Heart left ventricle (tissue), 16 donors: ENCODE measurements at regions of chr3 and their contacts with region 1.

Region 1: GRCh38 chr3:65385805-65386204 is 652.9 kb downstream of the MAGI1 start:
- DNase-seq: no peak
- ATAC-seq: peak in 3 of 4 donors; percentile 43 to 67 (median 45)
- H3K4me3 ChIP-seq: no peak overlapping the region
- H3K27ac ChIP-seq: peak overlapping the region in 1 of 12 donors; percentile 59
- H3K4me1 ChIP-seq: peaks cover 0 to 7% (median 0%) of the 10 kb centered on the region in 12 donors
- H3K27me3 ChIP-seq: no peaks in the 10 kb centered on the region
- CTCF ChIP-seq: no peak
- POLR2A ChIP-seq: no peak

Region 2: GRCh38 chr3:64084640-64085039 is 1301.2 kb before region 1 on chr3:
- intact Hi-C with region 1: no loop called
- DNase-seq: no peak
- ATAC-seq: no peak
- H3K4me3 ChIP-seq: no peak overlapping the region
- H3K27ac ChIP-seq: no peak overlapping the region
- H3K4me1 ChIP-seq: peaks cover 0 to 8% (median 0%) of the 10 kb centered on the region in 12 donors
- H3K27me3 ChIP-seq: no peaks in the 10 kb centered on the region
- CTCF ChIP-seq: no peak
- POLR2A ChIP-seq: no peak

Region 3: GRCh38 chr3:66172394-66172793 is 786.6 kb after region 1 on chr3:
- intact Hi-C with region 1: no loop called
- DNase-seq: no peak
- ATAC-seq: no peak
- H3K4me3 ChIP-seq: no peak overlapping the region
- H3K27ac ChIP-seq: no peak overlapping the region
- H3K4me1 ChIP-seq: peaks cover 0 to 12% (median 0%) of the 10 kb centered on the region in 12 donors
- H3K27me3 ChIP-seq: no peaks in the 10 kb centered on the region
- CTCF ChIP-seq: no peak
- POLR2A ChIP-seq: no peak

Region 4: DNA sequence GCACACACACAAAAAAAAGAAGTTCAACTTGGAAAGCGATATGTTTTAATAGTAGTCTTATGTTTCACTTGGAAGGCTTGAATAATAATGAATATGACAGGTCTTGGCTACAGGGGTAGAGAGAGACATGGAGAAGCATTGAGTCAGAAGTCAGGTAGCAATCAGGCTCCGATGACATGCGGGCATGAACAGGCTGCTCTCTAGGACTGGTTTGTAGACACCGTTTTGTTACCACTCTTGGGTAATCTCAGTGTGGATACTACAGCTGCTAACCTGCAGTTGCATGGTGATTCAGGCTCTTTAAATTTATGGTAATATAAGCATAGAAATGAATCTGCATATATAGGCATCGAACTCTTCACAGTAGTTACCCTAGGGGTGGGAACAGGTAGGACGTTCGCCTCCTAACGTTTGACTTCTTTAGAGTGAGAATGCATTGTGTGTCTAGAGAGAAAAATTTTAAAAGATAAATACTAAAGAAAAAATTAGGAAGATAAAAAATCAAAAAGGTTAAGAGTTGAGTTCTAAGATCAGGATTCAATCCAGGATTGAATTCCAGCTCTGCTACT is 1370.7 kb after region 1 on chr3:
- intact Hi-C with region 1: loop called in 1 of 10 experiments (anchors 10 kb)
- DNase-seq: no peak
- ATAC-seq: no peak
- H3K4me3 ChIP-seq: no peak overlapping the region
- H3K27ac ChIP-seq: no peak overlapping the region
- H3K4me1 ChIP-seq: peaks cover 0 to 3% (median 0%) of the 10 kb centered on the region in 12 donors
- H3K27me3 ChIP-seq: no peaks in the 10 kb centered on the region
- CTCF ChIP-seq: no peak
- POLR2A ChIP-seq: no peak